ENCODE measurements at regions of chr16 and their contacts with region 1.

Region 1: DNA sequence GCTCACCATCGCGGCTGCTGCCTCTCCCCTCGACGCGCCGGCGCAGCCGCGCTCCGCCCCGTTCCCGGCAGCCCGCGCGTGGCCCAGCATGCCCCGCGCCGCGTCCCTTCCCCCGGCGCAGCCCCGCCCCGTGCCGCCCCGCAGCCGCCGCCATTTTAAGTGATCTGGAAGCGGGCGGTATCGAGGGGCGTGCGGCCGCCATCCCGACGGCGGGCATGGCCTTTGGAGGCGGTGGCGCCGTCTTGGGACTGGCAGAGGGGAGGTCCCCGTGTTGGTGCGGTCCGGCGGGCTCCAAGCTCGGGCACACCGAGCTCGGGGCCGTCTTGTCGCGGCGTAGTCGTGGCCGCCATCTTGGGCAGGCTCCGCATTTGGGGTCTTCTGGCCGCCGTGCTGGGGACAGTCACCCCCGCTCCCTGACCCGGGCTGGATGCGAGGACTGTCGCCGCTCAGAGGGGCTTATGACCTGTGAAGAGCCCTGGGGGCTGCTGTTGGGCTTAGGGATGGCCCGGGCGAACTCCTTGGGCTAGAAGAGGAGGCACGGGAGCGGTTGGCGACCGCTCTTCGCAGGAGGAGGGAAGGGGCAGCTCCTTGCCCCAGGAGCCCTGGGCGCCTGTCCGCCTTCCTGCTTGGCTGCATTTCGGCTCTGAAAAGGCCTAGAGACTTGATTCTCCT is at the start of gene ELOB:
- DNase-seq: peak; percentile 97
- H3K4me3 ChIP-seq: peak within 1 kb of the TSS; percentile 84 to 93 (median 88)
- H3K27ac ChIP-seq: peak within 1 kb of the TSS; percentile 98 to 100 (median 99)
- H3K4me1 ChIP-seq: peaks cover 24 to 48% (median 45%) of the 10 kb centered on the region in 4 donors
- H3K27me3 ChIP-seq: no peaks in the 10 kb centered on the region
- CTCF ChIP-seq: no peak
- EP300 ChIP-seq: no peak
- POLR2A ChIP-seq: no peak
- total RNA-seq, gene ELOB: 199 to 229 (median 213) TPM

Region 2: GRCh38 chr16:2720719-2721633 is 56.4 kb before region 1 on chr16:
- intact Hi-C with region 1: loop called (anchors 2 kb)
- DNase-seq: peak; percentile 95
- H3K4me3 ChIP-seq: peak overlapping the region; percentile 72 to 86 (median 80)
- H3K27ac ChIP-seq: peak overlapping the region; percentile 73 to 83 (median 78)
- H3K4me1 ChIP-seq: peaks cover 11 to 30% (median 23%) of the 10 kb centered on the region in 4 donors
- H3K27me3 ChIP-seq: peaks cover 0 to 22% (median 2%) of the 10 kb centered on the region in 4 donors
- CTCF ChIP-seq: peak in 2 of 3 experiments; percentile 64 to 81
- EP300 ChIP-seq: no peak
- POLR2A ChIP-seq: peak; percentile 17

Region 3: GRCh38 chr16:2752035-2752849 is 25.1 kb before region 1 on chr16 and contains the start of gene SRRM2:
- intact Hi-C with region 1: loop called (anchors 2 kb)
- DNase-seq: peak; percentile 99
- H3K4me3 ChIP-seq: peak within 1 kb of the TSS; percentile 74 to 95 (median 88)
- H3K27ac ChIP-seq: peak within 1 kb of the TSS; percentile 98 to 100 (median 100)
- H3K4me1 ChIP-seq: peaks cover 42 to 51% (median 47%) of the 10 kb centered on the region in 4 donors
- H3K27me3 ChIP-seq: no peaks in the 10 kb centered on the region
- CTCF ChIP-seq: peak in 1 of 3 experiments; percentile 7
- EP300 ChIP-seq: no peak
- POLR2A ChIP-seq: peak; percentile 99
- total RNA-seq, gene SRRM2: 126 to 325 (median 234) TPM

Region 4: DNA sequence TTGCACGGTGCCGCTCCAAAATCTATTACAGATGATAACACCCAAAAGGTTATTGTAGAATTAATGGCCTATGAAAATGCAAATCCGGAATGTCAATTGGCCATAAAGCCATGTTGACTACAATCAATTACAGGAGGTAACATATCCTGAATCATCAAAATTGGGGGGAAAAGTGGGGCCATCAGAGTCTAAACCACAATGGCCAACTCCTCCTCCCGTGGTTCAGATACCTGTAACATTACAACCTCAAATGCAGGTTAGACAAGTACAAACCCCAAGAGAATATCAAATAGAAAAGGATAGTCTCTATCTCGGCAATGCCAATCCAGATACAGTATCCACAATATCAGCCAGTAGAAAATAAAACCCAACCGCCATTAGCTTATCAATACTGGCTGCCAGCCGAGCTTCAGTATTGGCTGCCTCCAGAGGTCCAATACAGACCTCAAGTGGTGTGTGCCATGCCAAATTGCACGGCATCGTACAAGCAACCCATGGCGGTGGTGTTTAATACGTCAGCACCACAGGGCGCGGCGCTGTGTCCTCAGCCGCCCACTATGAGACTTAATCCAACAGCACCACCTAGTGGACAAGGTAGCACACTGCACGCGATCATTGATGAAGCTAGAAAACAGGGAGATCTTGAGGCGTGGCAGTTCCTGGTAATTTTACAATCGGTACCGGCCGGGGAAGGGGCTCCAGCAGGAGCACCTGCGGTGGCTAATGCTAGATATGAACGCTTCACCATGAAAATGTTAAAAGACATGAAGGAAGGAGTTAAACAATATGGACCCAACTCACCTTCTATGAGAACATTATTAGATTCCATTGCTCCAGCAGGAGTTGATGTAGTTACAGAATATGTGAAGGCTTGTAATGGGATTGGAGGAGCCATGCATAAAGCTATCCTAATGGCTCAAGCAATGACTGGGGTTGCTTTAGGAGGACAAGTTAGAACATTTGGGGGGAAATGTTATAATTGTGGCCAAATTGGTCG is 149.6 kb after region 1 on chr16:
- intact Hi-C with region 1: loop called (anchors 10 kb)
- DNase-seq: peak; percentile 97
- H3K4me3 ChIP-seq: peak overlapping the region; percentile 20 to 45 (median 35)
- H3K27ac ChIP-seq: peak overlapping the region in 2 of 4 donors; percentile 44 to 45
- H3K4me1 ChIP-seq: peaks cover 4 to 16% (median 10%) of the 10 kb centered on the region in 4 donors
- H3K27me3 ChIP-seq: no peaks in the 10 kb centered on the region
- CTCF ChIP-seq: peak; percentile 96 to 99 (median 99)
- EP300 ChIP-seq: no peak
- POLR2A ChIP-seq: no peak

Measured in esophagus muscularis mucosa (tissue), 4 donors.